ENCODE measurements at regions of chr5 and their contacts with region 1.

Region 1: DNA sequence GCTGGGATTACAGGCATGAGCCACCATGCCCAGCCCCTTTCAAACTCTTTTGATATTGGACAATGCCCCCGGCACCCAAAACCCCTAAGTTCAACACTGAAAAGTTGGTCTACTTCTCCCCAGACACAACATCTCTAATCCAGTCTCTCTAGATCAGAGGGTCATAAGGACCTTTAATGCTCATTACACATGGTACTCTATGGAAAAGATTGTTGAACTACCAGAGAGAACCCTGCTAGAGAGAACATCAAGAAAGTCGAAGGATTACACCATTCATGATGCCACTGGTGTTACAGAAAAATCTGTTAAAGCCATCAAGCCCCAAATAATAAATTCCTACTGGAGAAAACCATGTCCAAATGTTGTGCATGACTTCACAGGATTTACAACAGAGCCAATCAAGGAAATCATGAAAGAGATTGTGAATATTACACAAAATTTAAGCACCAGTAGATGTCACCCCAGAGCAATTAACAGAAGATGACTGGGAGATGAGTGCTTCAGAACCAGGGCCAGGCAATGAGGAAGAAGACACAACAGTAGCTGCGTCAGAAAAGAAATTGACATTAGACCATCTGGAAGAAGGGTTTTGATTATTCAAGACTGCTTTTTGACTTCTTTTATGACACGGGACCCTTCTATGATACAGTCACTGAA is 28.3 kb upstream of the NIPAL4 start:
- DNase-seq: peak; percentile 56
- CTCF ChIP-seq: peak; percentile 45

Region 2: GRCh38 chr5:157322581-157322980 is 109.1 kb before region 1 on chr5:
- CTCF ChIA-PET with region 1: no interaction called
- POLR2A ChIA-PET with region 1: no interaction called
- DNase-seq: no peak
- CTCF ChIP-seq: no peak

Region 3: GRCh38 chr5:157370967-157371366 is 60.7 kb before region 1 on chr5:
- CTCF ChIA-PET with region 1: no interaction called
- POLR2A ChIA-PET with region 1: no interaction called
- DNase-seq: no peak
- CTCF ChIP-seq: no peak

Region 4: GRCh38 chr5:157400741-157401495 is 30.8 kb before region 1 on chr5:
- CTCF ChIA-PET with region 1: interaction called, 11 read pairs
- POLR2A ChIA-PET with region 1: no interaction called
- DNase-seq: no peak
- CTCF ChIP-seq: no peak

Region 5: GRCh38 chr5:157449011-157449723 is 17.5 kb after region 1 on chr5:
- CTCF ChIA-PET with region 1: interaction called, 12 read pairs
- POLR2A ChIA-PET with region 1: no interaction called
- DNase-seq: no peak
- CTCF ChIP-seq: no peak

Region 6: DNA sequence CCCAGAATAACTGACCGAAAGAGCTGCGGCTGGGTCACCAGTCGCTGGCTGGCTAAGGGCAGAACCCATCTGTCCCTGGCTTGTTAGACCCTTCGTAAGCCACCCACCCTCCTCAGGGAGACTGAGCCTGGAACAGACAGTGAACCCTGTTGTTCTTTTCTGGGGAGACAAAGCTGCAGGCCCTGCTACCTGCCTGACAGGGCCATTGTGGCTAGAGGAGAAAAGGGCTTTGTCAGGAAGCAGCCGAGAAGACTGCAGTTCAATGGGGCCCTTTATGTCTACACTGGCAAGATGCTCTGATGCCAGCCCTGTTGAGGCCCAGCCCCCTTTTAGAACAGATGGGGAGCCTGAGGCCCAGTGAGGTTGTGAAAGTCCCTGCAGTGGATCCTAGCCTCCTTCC is 24.6 kb after region 1 on chr5:
- CTCF ChIA-PET with region 1: interaction called, 11 read pairs
- POLR2A ChIA-PET with region 1: no interaction called
- DNase-seq: no peak
- CTCF ChIP-seq: no peak

Region 7: GRCh38 chr5:157471709-157472108 is 40.0 kb after region 1 on chr5:
- CTCF ChIA-PET with region 1: interaction called, 38 read pairs
- POLR2A ChIA-PET with region 1: no interaction called
- DNase-seq: peak; percentile 54
- CTCF ChIP-seq: peak; percentile 67

Region 8: GRCh38 chr5:157476702-157477408 is 45.2 kb after region 1 on chr5:
- CTCF ChIA-PET with region 1: interaction called, 38 read pairs
- POLR2A ChIA-PET with region 1: interaction called, 3 read pairs
- DNase-seq: peak; percentile 72
- CTCF ChIP-seq: peak; percentile 75

Region 9: GRCh38 chr5:157718519-157718918 is 286.8 kb after region 1 on chr5:
- CTCF ChIA-PET with region 1: interaction called, 29 read pairs
- POLR2A ChIA-PET with region 1: no interaction called
- DNase-seq: peak; percentile 52
- CTCF ChIP-seq: peak; percentile 59

Measured in GM10248 (cell line).